ENCODE measurements at regions of chr14 and their contacts with region 1.

Region 1: GRCh38 chr14:89303457-89304435 is 113.3 kb downstream of the FOXN3 start:
- DNase-seq: peak; percentile 48 to 89
- H3K4me3 ChIP-seq: peak overlapping the region; percentile 24 to 43
- H3K27ac ChIP-seq: peak overlapping the region; percentile 86 to 91
- H3K4me1 ChIP-seq: peaks cover 13 to 46% of the 10 kb centered on the region in 2 donors
- H3K27me3 ChIP-seq: no peaks in the 10 kb centered on the region
- CTCF ChIP-seq: no peak

Region 2: DNA sequence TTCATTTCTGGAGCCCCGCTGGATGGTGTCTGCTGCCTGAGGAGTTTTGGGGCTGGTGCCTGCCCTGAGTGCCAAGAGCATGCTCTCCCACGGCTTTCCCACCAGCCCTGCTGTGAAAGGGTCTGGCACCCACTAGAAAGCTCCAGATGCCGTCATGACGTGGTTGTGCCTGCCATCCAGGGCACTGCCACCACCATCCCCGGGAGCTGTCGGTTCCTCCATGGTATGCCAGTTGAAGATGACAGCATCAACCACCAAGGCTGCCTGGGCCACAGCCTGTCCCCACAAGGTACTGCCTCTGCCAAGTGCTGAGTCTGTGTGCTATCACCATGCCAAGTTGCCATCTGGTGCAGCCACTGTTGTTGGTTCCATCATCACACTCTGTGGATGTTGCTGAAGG is 393.4 kb before region 1 on chr14:
- intact Hi-C with region 1: no loop called
- DNase-seq: no peak
- H3K4me3 ChIP-seq: no peak overlapping the region
- H3K27ac ChIP-seq: no peak overlapping the region
- H3K4me1 ChIP-seq: no peaks in the 10 kb centered on the region
- H3K27me3 ChIP-seq: no peaks in the 10 kb centered on the region
- CTCF ChIP-seq: no peak

Region 3: DNA sequence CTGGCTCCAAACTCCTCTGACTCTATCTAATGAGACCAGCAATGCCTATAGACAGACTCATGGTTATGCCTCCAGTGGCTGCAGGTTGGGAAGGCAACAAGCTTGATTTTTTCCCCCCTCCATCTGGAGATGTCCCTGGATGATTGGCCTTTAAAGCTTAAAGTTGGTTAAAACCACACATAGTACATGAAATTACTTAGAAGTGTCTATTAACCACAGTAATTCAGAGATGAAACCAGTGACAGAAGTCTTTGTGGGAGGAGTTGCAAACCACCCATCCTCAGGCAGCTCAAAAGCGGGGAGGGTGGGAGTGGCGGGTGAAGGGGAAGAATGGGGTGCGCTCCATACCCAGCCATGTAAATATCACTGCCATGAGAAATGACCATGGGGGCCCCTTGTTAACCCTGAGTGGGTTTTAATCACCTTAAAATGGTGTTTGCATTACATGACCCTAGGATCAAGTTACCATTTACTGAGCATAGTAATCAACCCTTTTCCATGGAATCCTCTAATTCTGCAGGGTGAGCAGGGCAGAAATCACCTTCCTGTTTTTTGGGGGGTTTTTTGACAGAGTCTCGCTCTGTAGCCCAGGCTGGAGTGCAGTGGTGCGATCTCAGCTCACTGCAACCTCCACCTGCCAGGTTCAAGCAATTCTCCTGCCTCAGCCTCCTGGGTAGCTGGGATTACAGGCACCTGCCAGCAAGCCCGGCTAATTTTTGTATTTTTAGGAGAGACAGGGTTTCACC is 20.3 kb before region 1 on chr14:
- intact Hi-C with region 1: loop called (anchors 2 kb)
- DNase-seq: peak in 1 of 2 donors; percentile 27
- H3K4me3 ChIP-seq: no peak overlapping the region
- H3K27ac ChIP-seq: peak overlapping the region; percentile 74 to 87
- H3K4me1 ChIP-seq: peaks cover 5 to 20% of the 10 kb centered on the region in 2 donors
- H3K27me3 ChIP-seq: no peaks in the 10 kb centered on the region
- CTCF ChIP-seq: no peak

Region 4: GRCh38 chr14:89336338-89336737 is 32.6 kb after region 1 on chr14:
- intact Hi-C with region 1: loop called (anchors 5 kb)
- DNase-seq: no peak
- H3K4me3 ChIP-seq: no peak overlapping the region
- H3K27ac ChIP-seq: peak overlapping the region in 1 of 2 donors; percentile 10
- H3K4me1 ChIP-seq: peaks cover 3 to 26% of the 10 kb centered on the region in 2 donors
- H3K27me3 ChIP-seq: no peaks in the 10 kb centered on the region
- CTCF ChIP-seq: no peak

Region 5: GRCh38 chr14:89359477-89360222 is 55.9 kb after region 1 on chr14:
- intact Hi-C with region 1: loop called (anchors 5 kb)
- DNase-seq: peak in 1 of 2 donors; percentile 78
- H3K4me3 ChIP-seq: no peak overlapping the region
- H3K27ac ChIP-seq: peak overlapping the region; percentile 69 to 81
- H3K4me1 ChIP-seq: peaks cover 5 to 20% of the 10 kb centered on the region in 2 donors
- H3K27me3 ChIP-seq: no peaks in the 10 kb centered on the region
- CTCF ChIP-seq: no peak

Measured in ascending aorta (tissue), 2 donors.